ENCODE measurements at regions of chr2 and their contacts with region 1.

Region 1: GRCh38 chr2:66581339-66582103 is 146.6 kb downstream of the MEIS1 start:
- DNase-seq: peak; percentile 46 to 73 (median 62)
- H3K4me3 ChIP-seq: peak overlapping the region; percentile 50
- H3K27ac ChIP-seq: peak overlapping the region; percentile 81 to 99
- H3K4me1 ChIP-seq: peaks cover 3% of the 10 kb centered on the region
- H3K27me3 ChIP-seq: no peaks in the 10 kb centered on the region
- CTCF ChIP-seq: no peak
- EP300 ChIP-seq: no peak
- POLR2A ChIP-seq: no peak

Region 2: DNA sequence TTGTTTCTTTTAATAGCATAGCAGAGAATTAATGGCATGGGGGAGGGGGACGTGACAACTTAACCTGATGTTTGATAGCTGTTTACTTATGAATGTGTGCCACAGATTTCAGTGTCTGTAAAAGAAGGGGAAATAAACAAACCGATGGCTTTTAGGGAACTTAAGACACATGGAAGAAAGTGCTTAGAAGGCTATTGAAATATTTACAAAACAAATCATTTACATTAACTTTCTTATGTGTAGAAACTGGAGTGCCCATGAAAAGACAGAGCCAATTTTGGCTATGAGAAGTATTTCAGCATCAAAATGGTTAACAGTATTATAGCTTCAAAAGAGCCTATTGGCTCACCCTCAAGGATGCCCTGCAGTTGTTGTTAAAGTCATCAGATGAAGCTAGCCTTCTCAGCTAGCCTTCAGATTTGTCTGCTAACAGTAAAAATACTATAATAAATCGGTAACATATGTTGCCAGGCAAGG is 109.5 kb after region 1 on chr2:
- intact Hi-C with region 1: loop called in 2 of 4 experiments (anchors 2 to 5 kb)
- DNase-seq: no peak
- H3K4me3 ChIP-seq: peak overlapping the region; percentile 19
- H3K27ac ChIP-seq: no peak overlapping the region
- H3K4me1 ChIP-seq: no peaks in the 10 kb centered on the region
- H3K27me3 ChIP-seq: no peaks in the 10 kb centered on the region
- CTCF ChIP-seq: no peak
- EP300 ChIP-seq: no peak
- POLR2A ChIP-seq: no peak

Measured in ovary (tissue), 10 donors.